Posterior vena cava (tissue), 2 donors: ENCODE measurements at regions of chr12 and their contacts with region 1.

Region 1: DNA sequence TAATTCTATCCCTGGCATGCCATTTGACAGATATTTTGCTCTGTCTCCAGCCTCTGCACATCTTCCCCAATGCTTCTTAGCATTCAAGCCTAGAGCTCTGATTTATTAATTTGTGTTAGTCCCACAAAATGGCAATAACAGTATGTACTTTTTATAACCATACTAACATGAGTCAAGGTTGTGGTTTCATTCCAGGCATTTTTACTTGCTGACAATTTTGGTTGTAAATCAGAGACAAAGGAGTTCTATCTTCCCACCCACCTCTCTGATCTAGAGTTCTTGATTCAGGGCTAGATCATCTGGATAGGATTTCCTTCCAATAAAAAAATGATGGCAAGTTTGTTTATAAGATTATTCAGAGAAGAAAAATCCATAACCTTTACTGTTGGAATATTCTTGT is 18.5 kb upstream of the CISTR start:
- DNase-seq: no peak

Region 2: GRCh38 chr12:53750812-53751335 is 19.4 kb before region 1 on chr12:
- intact Hi-C with region 1: no loop called
- DNase-seq: no peak

Region 3: DNA sequence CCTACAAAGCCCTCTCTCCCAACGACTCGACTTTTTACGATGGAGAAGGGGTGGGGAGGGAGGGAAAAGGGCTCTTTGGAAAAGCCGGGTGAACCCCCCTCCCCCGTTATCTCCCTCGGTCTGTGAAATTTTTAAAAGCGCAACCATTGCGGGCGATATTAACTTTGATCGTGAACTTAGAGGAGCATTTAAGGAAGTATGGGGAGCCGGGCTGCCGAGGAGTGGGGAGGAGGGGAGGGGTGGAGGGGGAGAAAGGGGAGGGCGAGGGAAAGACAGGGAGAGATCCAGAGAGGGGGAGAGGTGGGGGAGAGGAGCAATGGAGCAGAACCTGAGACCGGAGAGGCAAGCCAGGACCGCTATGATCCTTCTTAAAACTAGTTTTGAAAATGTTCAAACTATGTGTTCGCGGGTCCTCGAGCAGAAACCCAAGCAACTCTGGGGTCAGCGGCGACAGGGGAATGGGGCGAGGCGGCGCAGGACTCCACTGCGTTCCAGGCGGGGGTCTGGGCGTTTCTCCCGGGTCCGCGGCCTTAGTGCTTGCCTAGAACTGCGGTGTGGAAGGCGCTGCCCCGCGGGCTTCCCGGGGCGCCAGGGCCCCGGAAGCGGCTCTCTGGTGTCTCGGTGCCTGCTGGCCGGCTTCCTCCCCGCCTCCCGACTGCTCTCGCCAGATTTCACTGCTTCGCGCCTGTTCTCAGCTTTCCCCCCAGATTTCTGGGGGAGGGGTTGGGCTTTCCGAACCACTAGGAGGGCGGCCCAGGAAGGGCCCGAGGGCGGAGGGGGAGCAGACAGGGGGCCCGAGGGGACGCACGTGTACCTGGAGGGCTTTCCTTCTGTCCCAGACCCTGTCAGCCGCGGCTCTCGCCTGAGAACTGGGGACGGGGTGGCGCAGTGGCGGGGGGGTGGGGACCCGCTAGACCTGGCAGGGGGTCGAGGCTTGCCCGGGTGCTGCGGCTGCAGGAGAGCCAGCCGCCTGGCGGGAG is 204.1 kb after region 1 on chr12 and contains the start of gene HOTAIR:
- intact Hi-C with region 1: loop called in 1 of 2 experiments (anchors 10 kb)
- DNase-seq: no peak
- total RNA-seq, gene HOTAIR: 2.0 to 4.8 TPM

Region 4: DNA sequence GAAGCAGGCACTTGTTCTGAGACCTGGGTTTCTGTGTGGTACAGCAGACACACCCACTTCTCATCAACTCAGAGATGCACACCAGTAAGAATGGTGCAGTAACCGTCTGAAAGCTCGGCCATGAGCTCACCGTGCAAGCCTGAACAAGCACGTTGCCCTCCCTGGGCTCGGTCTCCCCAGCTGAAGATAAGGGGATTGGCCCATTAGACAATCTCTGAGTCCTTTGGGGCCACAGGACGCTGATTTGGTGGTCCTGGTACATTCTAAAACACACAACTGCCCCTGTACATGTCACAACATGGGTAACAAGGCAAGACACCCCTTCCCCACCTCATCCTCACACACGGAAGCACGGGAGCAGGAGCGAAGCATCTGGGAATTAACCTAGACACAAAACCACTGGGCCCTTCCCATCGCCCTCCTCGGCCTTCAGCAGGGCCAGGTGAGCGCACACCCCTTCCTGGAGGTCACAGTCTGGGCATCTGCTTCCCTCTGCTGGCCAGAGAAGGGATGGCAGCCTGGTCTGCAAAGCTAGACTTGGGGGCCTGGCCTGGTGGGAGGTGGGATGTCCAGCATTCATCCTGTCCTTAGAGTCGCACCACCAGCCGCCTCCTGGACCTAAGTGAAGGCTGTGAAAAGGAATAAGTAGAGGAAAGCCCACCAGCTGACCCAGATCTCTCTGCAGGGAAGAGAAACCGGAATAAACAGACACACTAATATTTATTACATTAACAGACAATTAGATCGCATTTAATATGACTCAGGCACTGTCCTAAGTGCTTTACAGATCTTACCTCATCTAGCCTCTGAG is 437.4 kb after region 1 on chr12:
- intact Hi-C with region 1: loop called in 1 of 2 experiments (anchors 5 kb)
- DNase-seq: peak; percentile 92